ENCODE measurements at regions of chr7 and their contacts with region 1.

Region 1: DNA sequence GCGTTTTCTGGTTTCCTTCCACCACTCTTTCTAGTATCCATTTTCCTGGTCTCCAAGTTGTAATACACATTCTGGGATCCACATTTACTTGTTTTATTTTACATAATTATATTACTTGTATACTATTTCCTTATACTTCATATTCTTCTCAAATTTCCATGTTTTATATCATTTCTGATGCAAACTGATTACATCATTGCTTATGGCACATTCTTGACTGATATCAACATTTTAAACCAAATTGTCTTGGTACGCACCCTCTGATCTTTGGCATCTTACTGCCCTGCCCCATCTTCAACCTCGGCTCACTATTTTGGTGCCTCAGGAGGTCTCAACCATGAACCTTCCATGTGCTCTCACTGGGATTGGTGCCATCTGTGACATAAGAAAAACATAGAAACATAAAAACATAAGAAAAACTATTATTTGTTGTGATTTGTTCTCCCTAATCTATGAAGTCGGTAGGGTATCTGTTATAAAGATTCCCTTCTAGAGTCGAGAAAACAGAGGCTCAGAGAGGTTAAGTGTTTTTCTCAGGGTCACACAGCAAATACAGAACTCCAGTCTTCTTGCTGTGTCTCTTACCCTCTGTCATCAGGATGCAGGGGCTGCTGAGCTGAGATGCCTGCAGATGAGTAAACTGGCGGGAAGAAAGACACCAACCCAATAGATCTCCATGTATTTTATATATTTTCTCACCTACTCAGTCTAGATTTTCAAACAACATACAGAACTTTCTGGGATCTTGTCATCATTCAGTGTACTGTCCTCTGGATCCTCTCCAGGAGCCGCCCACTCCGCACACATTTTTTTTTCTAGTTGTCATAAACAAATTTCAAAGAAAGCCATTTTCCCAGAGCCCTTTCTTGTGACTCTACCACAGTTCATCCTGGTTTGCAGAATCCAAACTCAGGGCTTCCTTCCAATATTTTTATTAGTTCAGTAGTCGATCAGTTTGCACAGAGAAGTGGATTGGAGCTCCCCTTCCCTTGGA is 79.5 kb downstream of the PARP12 start:
- DNase-seq: no peak
- ATAC-seq: no peak
- H3K4me3 ChIP-seq: no peak overlapping the region
- H3K4me3 Mint-ChIP-seq: no peak overlapping the region
- H3K27ac ChIP-seq: no peak overlapping the region
- H3K27ac Mint-ChIP-seq: no peak overlapping the region
- H3K4me1 ChIP-seq: peaks cover 9 to 10% of the 10 kb centered on the region in 2 donors
- H3K4me1 Mint-ChIP-seq: peaks cover 8 to 19% (median 17%) of the 10 kb centered on the region in 7 donors
- H3K27me3 ChIP-seq: no peaks in the 10 kb centered on the region
- H3K27me3 Mint-ChIP-seq: peaks cover 0 to 22% (median 0%) of the 10 kb centered on the region in 5 donors

Region 2: GRCh38 chr7:139687980-139688632 is 295.1 kb before region 1 on chr7:
- CTCF ChIA-PET with region 1: no interaction called
- POLR2A ChIA-PET with region 1: no interaction called
- intact Hi-C with region 1: no loop called
- DNase-seq: no peak
- ATAC-seq: no peak
- H3K4me3 ChIP-seq: no peak overlapping the region
- H3K4me3 Mint-ChIP-seq: no peak overlapping the region
- H3K27ac ChIP-seq: no peak overlapping the region
- H3K27ac Mint-ChIP-seq: peak overlapping the region in 4 of 9 donors; percentile 24 to 67 (median 42)
- H3K4me1 ChIP-seq: peaks cover 0 to 3% of the 10 kb centered on the region in 2 donors
- H3K4me1 Mint-ChIP-seq: peaks cover 14 to 44% (median 29%) of the 10 kb centered on the region in 7 donors
- H3K27me3 ChIP-seq: no peaks in the 10 kb centered on the region
- H3K27me3 Mint-ChIP-seq: no peaks in the 10 kb centered on the region

Region 3: DNA sequence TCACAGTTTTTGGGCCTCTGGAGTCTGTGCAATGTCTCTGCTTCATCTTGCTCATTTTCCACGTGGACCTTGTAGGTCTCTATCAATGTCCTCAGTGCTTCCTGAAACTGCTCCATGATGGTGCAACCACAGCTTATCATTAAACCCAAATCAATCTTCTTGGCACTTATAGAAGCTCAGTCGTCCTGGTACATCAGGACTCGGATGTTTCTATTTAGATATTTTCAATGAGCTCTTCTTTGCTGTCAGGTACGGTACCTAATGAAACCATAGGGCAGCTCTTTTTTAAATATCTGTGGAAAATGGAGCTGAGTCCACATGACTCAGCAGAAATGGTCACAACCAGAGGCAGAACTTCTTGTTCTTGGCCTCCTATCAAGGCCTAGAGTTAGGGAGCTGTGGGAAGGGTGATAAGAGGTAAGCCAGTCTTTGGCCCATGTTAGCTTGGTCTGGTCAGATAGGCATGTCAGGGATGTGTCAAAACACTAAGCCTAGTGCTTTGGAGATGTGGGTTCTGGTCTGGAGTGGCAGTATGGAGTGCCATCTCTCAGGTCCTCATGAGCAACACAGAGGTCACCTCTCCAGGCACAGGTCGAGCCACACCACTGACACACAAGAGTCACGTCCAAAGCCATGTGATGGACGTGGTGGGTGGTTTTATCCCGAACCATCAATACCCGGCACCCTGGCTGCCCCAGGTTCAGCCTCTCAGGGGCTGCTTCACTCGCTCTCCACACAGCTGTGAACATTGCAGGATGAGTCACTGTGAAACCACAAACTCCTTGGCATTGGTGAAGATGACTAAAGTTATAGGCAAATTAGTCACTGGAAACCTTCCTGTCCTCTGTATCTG is 67.1 kb before region 1 on chr7:
- CTCF ChIA-PET with region 1: no interaction called
- POLR2A ChIA-PET with region 1: interaction called, 3 read pairs
- intact Hi-C with region 1: loop called in 1 of 2 experiments (anchors 5 kb)
- DNase-seq: peak in 1 of 9 donors; percentile 66
- ATAC-seq: peak; percentile 90
- H3K4me3 ChIP-seq: no peak overlapping the region
- H3K4me3 Mint-ChIP-seq: peak overlapping the region in 1 of 10 donors; percentile 13
- H3K27ac ChIP-seq: no peak overlapping the region
- H3K27ac Mint-ChIP-seq: peak overlapping the region in 2 of 9 donors; percentile 15 to 31
- H3K4me1 ChIP-seq: peaks cover 0 to 6% of the 10 kb centered on the region in 2 donors
- H3K4me1 Mint-ChIP-seq: peaks cover 0 to 21% (median 6%) of the 10 kb centered on the region in 7 donors
- H3K27me3 ChIP-seq: no peaks in the 10 kb centered on the region
- H3K27me3 Mint-ChIP-seq: peaks cover 0 to 17% (median 0%) of the 10 kb centered on the region in 5 donors

Measured in naive thymus-derived CD4-positive, alpha-beta T cell (primary cell).